Left colon (tissue), 2 donors: ENCODE measurements at regions of chr22 and their contacts with region 1.

Region 1: DNA sequence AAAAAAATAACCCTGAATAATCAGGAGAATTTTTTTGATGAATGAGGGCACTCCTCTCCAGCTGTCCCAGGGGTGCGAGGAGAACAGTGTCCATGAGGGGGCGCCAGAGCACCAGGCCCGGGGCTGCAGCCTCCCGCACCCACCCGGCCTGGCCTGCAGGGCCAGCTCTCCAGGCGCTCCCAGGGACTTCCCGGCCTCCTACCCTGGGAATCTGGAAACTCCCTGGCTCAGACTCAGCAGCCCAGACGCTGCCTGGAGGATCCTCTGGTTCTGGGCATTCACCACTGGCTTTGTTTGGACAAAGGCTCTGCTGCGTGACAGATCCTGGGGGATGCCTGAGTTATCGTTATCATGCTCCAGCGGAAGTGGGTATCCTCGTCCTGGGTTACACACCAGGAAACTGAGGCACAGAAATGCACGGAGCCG is 31.0 kb downstream of the MCM5 start:
- DNase-seq: peak; percentile 88 to 90
- ATAC-seq: peak; percentile 95

Region 2: DNA sequence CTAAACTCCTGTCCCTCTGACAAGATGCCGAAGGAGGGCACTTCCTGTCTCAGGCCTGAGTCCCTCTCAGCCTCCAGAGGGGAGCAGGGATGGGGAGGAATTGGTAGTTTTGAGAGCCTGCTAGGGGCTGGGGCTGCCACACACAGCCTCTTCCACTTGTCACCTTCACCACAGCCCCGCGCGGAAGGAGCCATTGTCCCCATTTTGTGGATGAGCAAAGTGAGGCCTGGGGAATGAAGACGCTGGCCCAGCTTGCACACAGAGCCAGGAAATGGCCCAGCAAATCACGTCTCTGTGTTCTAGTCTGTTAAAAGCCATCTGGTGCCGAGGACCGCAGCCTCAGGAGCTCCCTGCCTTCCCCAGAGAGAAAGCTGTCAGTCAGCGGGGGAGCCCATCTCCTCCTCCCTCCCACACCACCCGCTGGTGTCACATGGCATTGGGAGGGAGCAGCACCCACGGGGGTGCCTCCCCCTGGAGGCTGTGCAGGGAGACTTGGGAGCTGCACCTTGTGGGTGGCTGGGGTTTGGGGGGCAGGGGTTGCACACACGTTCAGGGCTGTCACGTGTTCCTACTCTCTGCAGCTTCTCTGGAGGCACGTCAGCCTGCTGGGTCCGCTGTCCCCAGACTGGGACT is 144.3 kb after region 1 on chr22:
- intact Hi-C with region 1: loop called in 1 of 2 experiments (anchors 5 kb)
- DNase-seq: no peak
- ATAC-seq: no peak

Region 3: DNA sequence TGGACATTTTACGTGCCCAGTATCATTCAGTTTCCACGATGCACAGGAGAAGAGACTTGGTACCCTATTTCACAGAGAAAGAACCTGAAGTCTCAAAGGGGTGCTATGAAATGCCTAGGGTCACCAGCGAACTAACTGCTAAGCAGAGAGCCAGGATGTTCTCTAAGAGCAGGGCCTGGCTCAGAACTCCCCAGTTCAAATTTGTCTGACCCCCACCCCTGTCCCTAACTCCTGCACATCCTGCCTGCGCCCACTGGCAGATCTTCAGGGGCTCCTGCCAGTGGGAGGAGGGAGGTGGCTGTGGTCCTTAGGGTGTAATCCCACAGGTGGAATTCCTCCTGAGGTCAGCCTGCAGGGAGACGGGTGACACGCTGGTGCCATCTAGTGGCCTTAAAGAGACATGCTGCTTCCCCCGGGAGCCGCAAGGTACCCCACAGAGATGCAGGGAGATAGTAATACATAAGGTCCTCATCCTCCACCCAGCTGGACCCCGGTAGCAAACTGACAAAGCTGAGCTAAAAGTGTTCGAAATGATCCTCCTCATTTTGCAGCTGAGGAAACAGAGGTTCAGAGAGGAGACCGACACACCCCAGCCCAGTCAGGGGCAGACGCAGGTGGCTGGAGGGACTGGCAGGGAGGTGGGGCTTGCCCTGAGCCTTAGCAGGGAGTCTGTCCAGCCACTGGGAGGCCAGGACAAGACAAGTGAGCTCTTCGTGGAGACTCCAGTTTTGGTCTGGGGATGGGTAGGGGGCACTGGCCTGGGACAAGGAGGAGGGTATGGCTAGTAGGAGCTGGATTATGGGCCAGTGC is 152.2 kb after region 1 on chr22:
- intact Hi-C with region 1: loop called (anchors 2 to 5 kb)
- DNase-seq: peak; percentile 45 to 66
- ATAC-seq: peak; percentile 62